Panc1 (cell line): ENCODE measurements at regions of chr7 and their contacts with region 1.

Region 1: DNA sequence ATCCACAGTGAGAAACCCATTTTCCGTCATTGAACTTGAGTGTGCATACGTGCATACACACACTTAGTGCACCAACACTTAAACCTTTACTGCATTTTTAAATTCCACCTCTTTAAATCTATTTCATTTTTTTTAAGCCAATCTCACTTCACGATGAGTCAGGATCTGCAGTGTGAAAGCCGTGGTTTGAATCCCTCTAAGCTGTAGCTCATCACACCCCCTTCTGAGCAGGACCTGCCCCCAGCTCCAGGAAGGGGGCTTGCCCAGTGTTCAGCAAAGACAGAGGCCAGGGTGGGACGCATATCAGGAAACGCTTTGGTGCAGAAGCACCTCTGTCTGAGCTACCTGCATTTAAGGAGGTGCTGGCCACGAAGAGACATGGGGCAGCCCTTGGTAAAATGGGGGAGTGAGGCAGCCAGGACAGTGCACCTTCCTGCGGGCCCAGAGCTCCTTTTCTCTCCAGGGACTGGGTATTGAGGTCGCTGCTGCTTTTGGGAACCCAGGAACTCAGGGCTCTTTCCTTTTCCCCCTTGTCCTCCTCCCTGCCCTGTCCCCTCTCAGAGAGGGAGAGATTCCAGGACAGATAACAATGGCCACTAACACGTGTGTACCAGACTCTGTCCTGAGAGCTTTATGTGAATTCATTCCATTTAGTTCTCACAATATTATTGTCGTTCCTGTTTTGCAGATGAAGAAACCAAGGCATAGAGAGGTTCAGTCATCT is 21.7 kb downstream of the ZNF316 start:
- DNase-seq: no peak
- ATAC-seq: peak; percentile 59
- H3K4me3 ChIP-seq: peak overlapping the region in 1 of 2 experiments; percentile 3; a peak in 1 of 4 replicates
- H3K27ac ChIP-seq: peak overlapping the region; percentile 12; the same call in 1 of the 2 replicates
- H3K4me1 ChIP-seq: peaks cover 11% of the 10 kb centered on the region
- H3K27me3 ChIP-seq: no peaks in the 10 kb centered on the region
- CTCF ChIP-seq: no peak

Region 2: GRCh38 chr7:6615723-6616555 is 42.8 kb before region 1 on chr7:
- CTCF ChIA-PET with region 1: no interaction called
- POLR2A ChIA-PET with region 1: no interaction called
- in situ Hi-C with region 1: no loop called
- intact Hi-C with region 1: no loop called
- DNase-seq: no peak
- ATAC-seq: peak; percentile 52
- H3K4me3 ChIP-seq: peak overlapping the region; percentile 40 to 46
- H3K27ac ChIP-seq: no peak overlapping the region
- H3K4me1 ChIP-seq: no peaks in the 10 kb centered on the region; the same call in 1 of the 2 replicates
- H3K27me3 ChIP-seq: peaks cover 3% of the 10 kb centered on the region; the same call in 1 of the 2 replicates
- CTCF ChIP-seq: no peak

Region 3: DNA sequence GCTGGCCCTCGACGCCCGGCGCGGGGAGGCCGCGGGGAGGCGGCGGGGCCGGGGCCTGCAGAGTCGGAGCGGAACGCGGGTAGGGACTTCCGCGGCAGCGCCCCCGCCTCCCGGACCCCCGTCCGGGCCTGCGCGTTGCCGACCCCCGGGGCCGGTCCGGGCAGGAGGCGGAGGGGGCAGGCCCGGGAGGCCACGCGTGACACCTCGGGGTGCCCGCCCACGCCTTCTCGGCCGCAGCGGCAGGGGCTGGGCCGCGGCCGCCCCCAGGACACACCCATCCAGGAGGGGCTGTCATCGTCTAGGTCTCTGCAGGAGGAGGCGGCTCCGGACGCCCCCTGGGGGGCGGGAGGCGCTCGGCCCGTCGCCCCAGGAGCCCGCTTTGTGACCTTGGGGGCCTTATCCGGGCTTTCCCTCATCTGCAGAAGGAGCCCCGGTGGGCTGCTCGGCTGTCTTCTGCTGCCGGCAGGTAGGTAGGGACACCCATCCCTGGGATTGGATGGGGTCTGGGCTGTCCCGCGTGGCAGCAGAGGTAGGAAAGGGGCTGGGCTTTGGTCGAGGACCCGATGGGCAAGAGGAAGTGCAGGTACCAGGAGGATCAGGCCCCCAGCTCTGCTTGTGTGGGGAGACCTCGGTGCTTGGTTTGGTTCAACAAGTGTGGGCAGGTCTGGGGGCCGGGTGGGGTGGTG is 21.1 kb before region 1 on chr7:
- CTCF ChIA-PET with region 1: no interaction called
- POLR2A ChIA-PET with region 1: no interaction called
- in situ Hi-C with region 1: no loop called
- intact Hi-C with region 1: no loop called
- DNase-seq: no peak
- ATAC-seq: peak; percentile 78
- H3K4me3 ChIP-seq: peak overlapping the region; percentile 77 to 78
- H3K27ac ChIP-seq: peak overlapping the region; percentile 75
- H3K4me1 ChIP-seq: peaks cover 15% of the 10 kb centered on the region
- H3K27me3 ChIP-seq: no peaks in the 10 kb centered on the region
- CTCF ChIP-seq: no peak

Region 4: GRCh38 chr7:6647541-6648247 is 11.1 kb before region 1 on chr7:
- CTCF ChIA-PET with region 1: no interaction called
- POLR2A ChIA-PET with region 1: no interaction called
- in situ Hi-C with region 1: no loop called
- intact Hi-C with region 1: no loop called
- DNase-seq: no peak
- ATAC-seq: no peak
- H3K4me3 ChIP-seq: no peak overlapping the region
- H3K27ac ChIP-seq: no peak overlapping the region
- H3K4me1 ChIP-seq: no peaks in the 10 kb centered on the region
- H3K27me3 ChIP-seq: no peaks in the 10 kb centered on the region
- CTCF ChIP-seq: no peak

Region 5: GRCh38 chr7:6675807-6676405 is 17.1 kb after region 1 on chr7:
- CTCF ChIA-PET with region 1: no interaction called
- POLR2A ChIA-PET with region 1: interaction called, 16 read pairs
- in situ Hi-C with region 1: no loop called
- intact Hi-C with region 1: no loop called
- DNase-seq: no peak
- ATAC-seq: no peak
- H3K4me3 ChIP-seq: no peak overlapping the region
- H3K27ac ChIP-seq: no peak overlapping the region
- H3K4me1 ChIP-seq: no peaks in the 10 kb centered on the region
- H3K27me3 ChIP-seq: no peaks in the 10 kb centered on the region
- CTCF ChIP-seq: no peak